ENCODE measurements at regions of chr9 and their contacts with region 1.

Region 1: GRCh38 chr9:17531642-17532254 is 47.1 kb upstream of the SH3GL2 start:
- DNase-seq: no peak
- H3K4me3 Mint-ChIP-seq: no peak overlapping the region
- H3K27ac Mint-ChIP-seq: no peak overlapping the region
- H3K4me1 Mint-ChIP-seq: no peaks in the 10 kb centered on the region
- H3K27me3 Mint-ChIP-seq: no peaks in the 10 kb centered on the region

Region 2: GRCh38 chr9:16787724-16788123 is 744.0 kb before region 1 on chr9:
- intact Hi-C with region 1: no loop called
- DNase-seq: no peak
- H3K4me3 Mint-ChIP-seq: no peak overlapping the region
- H3K27ac Mint-ChIP-seq: no peak overlapping the region
- H3K4me1 Mint-ChIP-seq: no peaks in the 10 kb centered on the region
- H3K27me3 Mint-ChIP-seq: no peaks in the 10 kb centered on the region

Region 3: GRCh38 chr9:17476401-17476800 is 55.3 kb before region 1 on chr9:
- intact Hi-C with region 1: loop called (anchors 10 kb)
- DNase-seq: no peak
- H3K4me3 Mint-ChIP-seq: no peak overlapping the region
- H3K27ac Mint-ChIP-seq: no peak overlapping the region
- H3K4me1 Mint-ChIP-seq: no peaks in the 10 kb centered on the region
- H3K27me3 Mint-ChIP-seq: no peaks in the 10 kb centered on the region

Region 4: DNA sequence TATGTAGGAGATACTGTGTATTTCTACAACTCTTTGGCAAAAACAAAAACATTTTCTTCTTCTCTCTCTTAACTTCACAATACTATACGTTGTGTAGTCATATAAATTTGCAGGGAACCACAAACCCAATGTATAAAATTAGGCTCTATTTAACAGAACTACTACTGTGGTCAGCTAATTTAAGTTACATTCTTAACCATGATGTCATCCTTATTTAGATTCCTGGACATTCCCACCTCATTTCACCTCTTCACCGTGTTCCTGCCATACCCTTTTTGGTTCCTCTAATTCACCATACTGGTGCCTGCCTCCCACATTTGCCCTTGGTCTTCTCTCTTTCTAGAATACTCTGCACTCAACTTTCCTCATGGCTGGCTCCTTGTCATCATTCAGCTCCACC is 28.6 kb before region 1 on chr9:
- intact Hi-C with region 1: no loop called
- DNase-seq: no peak
- H3K4me3 Mint-ChIP-seq: no peak overlapping the region
- H3K27ac Mint-ChIP-seq: no peak overlapping the region
- H3K4me1 Mint-ChIP-seq: no peaks in the 10 kb centered on the region
- H3K27me3 Mint-ChIP-seq: no peaks in the 10 kb centered on the region

Region 5: GRCh38 chr9:17613763-17614162 is 82.0 kb after region 1 on chr9:
- intact Hi-C with region 1: no loop called
- DNase-seq: no peak
- H3K4me3 Mint-ChIP-seq: no peak overlapping the region
- H3K27ac Mint-ChIP-seq: no peak overlapping the region
- H3K4me1 Mint-ChIP-seq: no peaks in the 10 kb centered on the region
- H3K27me3 Mint-ChIP-seq: no peaks in the 10 kb centered on the region

Region 6: DNA sequence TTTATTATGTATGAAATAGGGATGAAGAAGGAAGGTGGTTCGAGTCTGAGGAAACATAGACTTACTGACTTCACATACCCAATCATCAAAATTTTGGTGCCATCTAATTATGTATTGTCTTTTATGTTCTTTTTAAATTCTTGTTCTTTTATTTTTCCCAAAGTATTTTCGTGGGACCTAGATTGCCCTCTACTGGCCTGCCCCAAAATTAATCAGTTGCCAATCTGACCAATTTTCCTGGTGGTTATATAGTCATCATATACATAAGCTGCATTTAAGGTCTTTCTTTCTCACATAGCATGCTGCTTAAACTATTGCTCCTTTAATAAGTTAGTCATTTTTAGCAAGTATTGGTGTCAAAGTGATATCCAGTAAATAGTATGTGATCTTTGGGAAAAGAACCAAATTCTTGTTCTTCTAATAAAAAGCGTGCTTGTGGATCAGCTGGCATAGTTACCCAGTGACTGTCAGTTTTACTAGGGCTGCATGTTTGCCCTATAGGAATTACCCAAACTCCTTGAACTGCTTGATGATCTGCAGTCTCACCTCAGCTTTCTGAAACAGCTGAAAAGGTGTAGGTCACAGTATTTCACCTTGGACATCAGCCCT is 270.6 kb after region 1 on chr9:
- intact Hi-C with region 1: loop called (anchors 1 kb)
- DNase-seq: no peak
- H3K4me3 Mint-ChIP-seq: no peak overlapping the region
- H3K27ac Mint-ChIP-seq: no peak overlapping the region
- H3K4me1 Mint-ChIP-seq: no peaks in the 10 kb centered on the region
- H3K27me3 Mint-ChIP-seq: no peaks in the 10 kb centered on the region

Region 7: GRCh38 chr9:18215626-18216025 is 683.9 kb after region 1 on chr9:
- intact Hi-C with region 1: loop called (anchors 10 kb)
- DNase-seq: no peak
- H3K4me3 Mint-ChIP-seq: no peak overlapping the region
- H3K27ac Mint-ChIP-seq: no peak overlapping the region
- H3K4me1 Mint-ChIP-seq: no peaks in the 10 kb centered on the region
- H3K27me3 Mint-ChIP-seq: no peaks in the 10 kb centered on the region

Measured in activated T-helper 2 cell treated with anti-CD3 and anti-CD28 coated beads, Interferon-gamma antibody, Interleukin-2, Interleukin-4, amounts not matched to agents 10 μg/mL and 5 μg/mL and 100 μg/mL, durations not matched to agents 14 hours and 24 hours and 36 hours (primary cell).